ENCODE measurements at regions of chr2 and their contacts with region 1.

Region 1: GRCh38 chr2:203605302-203605701 is 70.2 kb upstream of the RAPH1 start:
- DNase-seq: no peak
- H3K4me3 ChIP-seq: no peak overlapping the region
- H3K27ac ChIP-seq: no peak overlapping the region
- H3K4me1 ChIP-seq: no peaks in the 10 kb centered on the region
- H3K27me3 ChIP-seq: no peaks in the 10 kb centered on the region
- CTCF ChIP-seq: no peak

Region 2: GRCh38 chr2:203360833-203361430 is 244.4 kb before region 1 on chr2:
- CTCF ChIA-PET with region 1: no interaction called
- POLR2A ChIA-PET with region 1: no interaction called
- intact Hi-C with region 1: no loop called
- DNase-seq: no peak
- H3K4me3 ChIP-seq: no peak overlapping the region
- H3K27ac ChIP-seq: no peak overlapping the region
- H3K4me1 ChIP-seq: no peaks in the 10 kb centered on the region
- H3K27me3 ChIP-seq: no peaks in the 10 kb centered on the region
- CTCF ChIP-seq: no peak

Region 3: GRCh38 chr2:203713381-203713780 is 108.1 kb after region 1 on chr2:
- CTCF ChIA-PET with region 1: interaction called, 10 read pairs
- POLR2A ChIA-PET with region 1: no interaction called
- intact Hi-C with region 1: no loop called
- DNase-seq: no peak
- H3K4me3 ChIP-seq: no peak overlapping the region
- H3K27ac ChIP-seq: no peak overlapping the region
- H3K4me1 ChIP-seq: no peaks in the 10 kb centered on the region
- H3K27me3 ChIP-seq: peaks cover 6% of the 10 kb centered on the region
- CTCF ChIP-seq: no peak

Measured in A673 (cell line).